CD8-positive, alpha-beta memory T cell (primary cell): ENCODE measurements at regions of chr15 and their contacts with region 1.

Region 1: GRCh38 chr15:73964736-73965093 is 27.4 kb downstream of the STOML1 start:
- DNase-seq: peak; percentile 76 to 89 (median 82)
- H3K4me3 ChIP-seq: peak overlapping the region; percentile 72
- H3K4me3 Mint-ChIP-seq: peak overlapping the region; percentile 30 to 93 (median 81)
- H3K27ac ChIP-seq: no peak overlapping the region
- H3K27ac Mint-ChIP-seq: peak overlapping the region in 6 of 8 donors; percentile 2 to 77 (median 18)
- H3K4me1 ChIP-seq: peaks cover 30% of the 10 kb centered on the region
- H3K4me1 Mint-ChIP-seq: peaks cover 24 to 31% (median 30%) of the 10 kb centered on the region in 3 donors
- H3K27me3 ChIP-seq: no peaks in the 10 kb centered on the region
- H3K27me3 Mint-ChIP-seq: peaks cover 0 to 1% of the 10 kb centered on the region in 2 donors

Region 2: GRCh38 chr15:73891328-73892315 is 73.1 kb before region 1 on chr15:
- CTCF ChIA-PET with region 1: no interaction called
- POLR2A ChIA-PET with region 1: no interaction called
- DNase-seq: no peak
- H3K4me3 ChIP-seq: no peak overlapping the region
- H3K4me3 Mint-ChIP-seq: no peak overlapping the region
- H3K27ac ChIP-seq: no peak overlapping the region
- H3K27ac Mint-ChIP-seq: peak overlapping the region in 1 of 8 donors; percentile 54
- H3K4me1 ChIP-seq: no peaks in the 10 kb centered on the region
- H3K4me1 Mint-ChIP-seq: no peaks in the 10 kb centered on the region
- H3K27me3 ChIP-seq: no peaks in the 10 kb centered on the region
- H3K27me3 Mint-ChIP-seq: peaks cover 16 to 31% of the 10 kb centered on the region in 2 donors

Region 3: GRCh38 chr15:73950831-73951561 is 13.7 kb before region 1 on chr15:
- CTCF ChIA-PET with region 1: interaction called, 71 read pairs
- POLR2A ChIA-PET with region 1: interaction called, 5 read pairs
- DNase-seq: peak; percentile 47 to 82 (median 57)
- H3K4me3 ChIP-seq: no peak overlapping the region
- H3K4me3 Mint-ChIP-seq: no peak overlapping the region
- H3K27ac ChIP-seq: no peak overlapping the region
- H3K27ac Mint-ChIP-seq: peak overlapping the region in 6 of 8 donors; percentile 41 to 90 (median 80)
- H3K4me1 ChIP-seq: no peaks in the 10 kb centered on the region
- H3K4me1 Mint-ChIP-seq: peaks cover 4 to 8% (median 6%) of the 10 kb centered on the region in 3 donors
- H3K27me3 ChIP-seq: no peaks in the 10 kb centered on the region
- H3K27me3 Mint-ChIP-seq: peaks cover 0 to 9% of the 10 kb centered on the region in 2 donors